T-cell (primary cell): ENCODE measurements at regions of chr9 and their contacts with region 1.

Region 1: GRCh38 chr9:111597817-111598729 is 1.4 kb downstream of the PTGR1 start:
- DNase-seq: peak; percentile 28 to 81 (median 55)
- ATAC-seq: peak; percentile 51 to 86 (median 60)
- H3K4me3 ChIP-seq: peak overlapping the region; percentile 55 to 81
- H3K4me3 Mint-ChIP-seq: peak overlapping the region; percentile 83 to 91 (median 88)
- H3K27ac ChIP-seq: no peak overlapping the region
- H3K27ac Mint-ChIP-seq: no peak overlapping the region
- H3K4me1 ChIP-seq: peaks cover 2 to 24% of the 10 kb centered on the region in 2 experiments
- H3K4me1 Mint-ChIP-seq: peaks cover 16 to 24% (median 21%) of the 10 kb centered on the region in 3 donors
- H3K27me3 ChIP-seq: peaks cover 0 to 38% of the 10 kb centered on the region in 2 experiments
- H3K27me3 Mint-ChIP-seq: peaks cover 22 to 39% of the 10 kb centered on the region in 2 donors

Region 2: DNA sequence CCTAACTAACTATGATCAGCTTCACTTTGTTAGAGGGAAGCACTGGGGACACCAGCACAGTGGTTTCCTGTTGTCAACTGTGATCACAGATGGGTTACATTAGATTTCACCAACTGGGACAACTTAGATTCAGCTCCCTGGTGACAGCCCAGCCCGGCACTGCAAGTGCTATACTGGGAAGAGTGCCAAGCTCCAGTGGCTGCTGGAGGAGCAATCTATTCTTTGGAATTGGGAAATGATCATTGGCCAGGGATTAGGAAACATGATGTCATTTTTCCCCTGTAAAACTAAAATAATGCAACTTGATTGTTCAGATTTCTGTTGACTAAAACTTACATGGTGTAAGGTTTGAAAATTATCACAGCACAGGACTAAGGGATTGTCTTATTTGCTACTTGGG is 31.8 kb before region 1 on chr9:
- CTCF ChIA-PET with region 1: no interaction called
- POLR2A ChIA-PET with region 1: no interaction called
- DNase-seq: no peak
- ATAC-seq: no peak
- H3K4me3 ChIP-seq: no peak overlapping the region
- H3K4me3 Mint-ChIP-seq: no peak overlapping the region
- H3K27ac ChIP-seq: no peak overlapping the region
- H3K27ac Mint-ChIP-seq: no peak overlapping the region
- H3K4me1 ChIP-seq: no peaks in the 10 kb centered on the region
- H3K4me1 Mint-ChIP-seq: no peaks in the 10 kb centered on the region
- H3K27me3 ChIP-seq: peaks cover 0 to 9% of the 10 kb centered on the region in 2 experiments
- H3K27me3 Mint-ChIP-seq: peaks cover 9% of the 10 kb centered on the region in 2 donors

Region 3: GRCh38 chr9:111789881-111790280 is 191.8 kb after region 1 on chr9:
- CTCF ChIA-PET with region 1: no interaction called
- POLR2A ChIA-PET with region 1: no interaction called
- DNase-seq: no peak
- ATAC-seq: no peak
- H3K4me3 ChIP-seq: no peak overlapping the region
- H3K4me3 Mint-ChIP-seq: no peak overlapping the region
- H3K27ac ChIP-seq: no peak overlapping the region
- H3K27ac Mint-ChIP-seq: no peak overlapping the region
- H3K4me1 ChIP-seq: no peaks in the 10 kb centered on the region
- H3K4me1 Mint-ChIP-seq: no peaks in the 10 kb centered on the region
- H3K27me3 ChIP-seq: no peaks in the 10 kb centered on the region
- H3K27me3 Mint-ChIP-seq: no peaks in the 10 kb centered on the region

Region 4: GRCh38 chr9:112002131-112002846 is 404.2 kb after region 1 on chr9:
- CTCF ChIA-PET with region 1: interaction called in 1 of 2 experiments, 16 read pairs
- POLR2A ChIA-PET with region 1: no interaction called
- DNase-seq: peak in 31 of 35 experiments; percentile 2 to 59 (median 24)
- ATAC-seq: peak; percentile 94 to 98 (median 97)
- H3K4me3 ChIP-seq: no peak overlapping the region
- H3K4me3 Mint-ChIP-seq: peak overlapping the region in 2 of 3 donors; percentile 35 to 56
- H3K27ac ChIP-seq: peak overlapping the region; percentile 43
- H3K27ac Mint-ChIP-seq: peak overlapping the region; percentile 86 to 92
- H3K4me1 ChIP-seq: peaks cover 13 to 34% of the 10 kb centered on the region in 2 experiments
- H3K4me1 Mint-ChIP-seq: peaks cover 32 to 42% (median 35%) of the 10 kb centered on the region in 3 donors
- H3K27me3 ChIP-seq: no peaks in the 10 kb centered on the region
- H3K27me3 Mint-ChIP-seq: no peaks in the 10 kb centered on the region